IMR-90 (cell line): ENCODE measurements at regions of chr6 and their contacts with region 1.

Region 1: DNA sequence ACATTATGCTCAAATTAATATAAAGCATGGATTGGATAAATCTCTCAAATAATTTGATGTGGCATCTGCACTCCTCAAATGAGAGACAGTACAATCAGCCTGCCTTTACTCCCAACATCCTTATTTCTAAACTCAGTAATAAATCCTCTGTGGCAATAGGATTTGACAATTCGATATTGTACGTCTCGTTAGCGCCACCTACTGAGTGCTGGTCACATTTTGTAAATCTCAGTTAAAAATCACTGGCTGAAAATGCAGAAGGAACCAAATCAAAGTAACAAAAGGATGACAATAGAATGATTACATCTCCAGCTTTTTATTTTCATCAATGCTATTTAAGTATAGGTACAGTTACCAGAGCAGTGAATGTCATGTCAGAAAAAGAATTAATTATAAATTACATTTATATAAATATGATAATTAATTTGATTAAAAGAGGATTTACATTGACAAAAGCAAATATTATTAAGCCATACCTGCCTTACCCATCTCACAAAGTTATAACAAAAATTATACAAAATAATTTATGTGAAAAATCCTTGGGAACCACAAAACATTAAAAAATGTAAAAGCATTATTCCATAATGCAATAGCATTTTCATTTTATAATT is 20.2 kb upstream of the GJE1 start:
- DNase-seq: peak; percentile 77
- ATAC-seq: peak; percentile 68
- H3K4me3 ChIP-seq: no peak overlapping the region
- H3K27ac ChIP-seq: no peak overlapping the region
- H3K4me1 ChIP-seq: no peaks in the 10 kb centered on the region
- H3K27me3 ChIP-seq: no peaks in the 10 kb centered on the region
- CTCF ChIP-seq: peak; percentile 87
- POLR2A ChIP-seq: no peak
- RAD21 ChIP-seq: peak; percentile 82

Region 2: GRCh38 chr6:141677598-141678211 is 434.9 kb before region 1 on chr6:
- CTCF ChIA-PET with region 1: no interaction called
- POLR2A ChIA-PET with region 1: no interaction called
- dilution Hi-C with region 1: no loop called
- in situ Hi-C with region 1: loop called (anchors 10 kb)
- intact Hi-C with region 1: loop called (anchors 1 kb)
- DNase-seq: peak; percentile 47
- ATAC-seq: peak; percentile 70
- H3K4me3 ChIP-seq: no peak overlapping the region
- H3K27ac ChIP-seq: no peak overlapping the region
- H3K4me1 ChIP-seq: no peaks in the 10 kb centered on the region
- H3K27me3 ChIP-seq: no peaks in the 10 kb centered on the region
- CTCF ChIP-seq: peak; percentile 68
- POLR2A ChIP-seq: no peak
- RAD21 ChIP-seq: peak; percentile 58

Region 3: GRCh38 chr6:141988954-141989705 is 123.4 kb before region 1 on chr6:
- CTCF ChIA-PET with region 1: interaction called, 9 read pairs
- POLR2A ChIA-PET with region 1: no interaction called
- dilution Hi-C with region 1: no loop called
- in situ Hi-C with region 1: loop called (anchors 10 kb)
- intact Hi-C with region 1: loop called (anchors 1 kb)
- DNase-seq: peak; percentile 81
- ATAC-seq: peak; percentile 91
- H3K4me3 ChIP-seq: no peak overlapping the region
- H3K27ac ChIP-seq: no peak overlapping the region
- H3K4me1 ChIP-seq: peaks cover 2% of the 10 kb centered on the region; the same call in 1 of the 2 replicates
- H3K27me3 ChIP-seq: no peaks in the 10 kb centered on the region
- CTCF ChIP-seq: peak; percentile 84
- POLR2A ChIP-seq: peak; percentile 44; the same call in 1 of the 2 replicates
- RAD21 ChIP-seq: peak; percentile 91

Region 4: DNA sequence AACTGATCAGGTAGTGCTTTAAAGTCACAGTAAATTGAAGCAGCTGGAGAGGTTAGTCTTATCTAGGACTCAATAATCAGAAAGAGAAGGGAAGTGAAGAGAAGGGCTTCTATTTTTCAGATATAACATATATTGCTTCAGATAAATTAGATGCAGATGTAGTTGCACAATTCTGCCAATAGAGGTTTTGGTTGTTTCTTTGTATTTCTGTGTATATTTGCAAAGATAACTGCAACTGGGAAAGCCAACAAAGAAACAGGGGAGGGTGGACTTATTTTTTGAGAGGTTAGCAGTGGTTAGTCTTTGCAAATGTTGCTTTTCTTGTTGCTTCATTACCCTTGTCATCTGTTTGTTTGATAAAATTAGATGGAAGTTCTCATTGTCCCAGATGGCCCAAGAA is 295.9 kb after region 1 on chr6:
- CTCF ChIA-PET with region 1: no interaction called
- POLR2A ChIA-PET with region 1: no interaction called
- dilution Hi-C with region 1: no loop called
- in situ Hi-C with region 1: no loop called
- intact Hi-C with region 1: no loop called
- DNase-seq: no peak
- ATAC-seq: no peak
- H3K4me3 ChIP-seq: no peak overlapping the region
- H3K27ac ChIP-seq: no peak overlapping the region
- H3K4me1 ChIP-seq: peaks cover 4% of the 10 kb centered on the region
- H3K27me3 ChIP-seq: no peaks in the 10 kb centered on the region
- CTCF ChIP-seq: no peak
- POLR2A ChIP-seq: no peak
- RAD21 ChIP-seq: no peak

Region 5: DNA sequence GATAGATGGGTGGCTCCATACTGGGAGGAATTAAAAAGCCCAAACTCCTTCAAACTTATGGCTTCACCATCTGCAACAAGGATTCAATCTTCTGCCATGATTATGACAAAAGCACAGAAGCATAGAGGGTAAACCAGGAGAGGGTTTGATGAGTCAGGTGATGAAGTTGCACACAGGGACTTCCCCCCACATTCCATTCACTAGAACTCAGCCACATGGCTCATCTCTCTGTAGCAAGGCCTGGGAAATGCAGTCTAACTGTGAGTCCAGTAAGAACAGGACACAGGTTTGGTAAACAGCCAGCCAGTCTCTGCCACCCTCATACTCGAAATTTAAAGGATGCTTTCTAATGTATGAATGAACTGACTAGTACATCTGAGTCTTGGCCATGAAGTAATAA is 689.6 kb after region 1 on chr6:
- CTCF ChIA-PET with region 1: no interaction called
- POLR2A ChIA-PET with region 1: no interaction called
- dilution Hi-C with region 1: no loop called
- in situ Hi-C with region 1: no loop called
- intact Hi-C with region 1: no loop called
- DNase-seq: peak; percentile 99
- ATAC-seq: peak; percentile 99
- H3K4me3 ChIP-seq: no peak overlapping the region
- H3K27ac ChIP-seq: no peak overlapping the region
- H3K4me1 ChIP-seq: peaks cover 3% of the 10 kb centered on the region; the same call in 1 of the 2 replicates
- H3K27me3 ChIP-seq: no peaks in the 10 kb centered on the region
- CTCF ChIP-seq: no peak
- POLR2A ChIP-seq: peak; percentile 55; the same call in 1 of the 2 replicates
- RAD21 ChIP-seq: peak; percentile 37